Mammary epithelial cell (primary cell): ENCODE measurements at regions of chr10 and their contacts with region 1.

Region 1: GRCh38 chr10:77494327-77494726 is 143.3 kb downstream of the KCNMA1 start:
- DNase-seq: no peak
- H3K4me3 ChIP-seq: no peak overlapping the region
- H3K27ac ChIP-seq: no peak overlapping the region
- H3K4me1 ChIP-seq: peaks cover 33% of the 10 kb centered on the region
- H3K27me3 ChIP-seq: no peaks in the 10 kb centered on the region
- CTCF ChIP-seq: peak; percentile 27 to 40

Region 2: DNA sequence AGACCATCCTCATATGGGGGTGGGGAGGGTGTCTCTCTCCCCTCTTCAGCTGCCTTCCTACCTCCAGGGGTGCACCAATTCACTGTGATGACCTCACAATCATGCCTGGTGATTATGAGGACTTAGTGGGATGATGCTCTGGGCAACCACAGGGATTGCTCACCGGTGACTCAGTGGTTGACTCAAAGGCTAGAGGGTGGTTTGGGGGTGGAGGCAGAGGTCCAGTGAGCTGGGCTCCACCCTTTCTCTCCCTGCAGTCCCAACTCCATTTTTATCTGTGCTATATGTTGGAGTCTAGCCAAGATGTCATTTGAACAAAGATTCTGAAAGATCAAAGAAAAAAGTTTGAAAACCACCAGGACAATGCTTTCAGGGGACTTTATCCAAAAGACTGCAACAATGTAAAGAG is 143.6 kb before region 1 on chr10:
- CTCF ChIA-PET with region 1: no interaction called
- dilution Hi-C with region 1: no loop called
- in situ Hi-C with region 1: no loop called
- intact Hi-C with region 1: no loop called
- DNase-seq: peak; percentile 98
- H3K4me3 ChIP-seq: no peak overlapping the region
- H3K27ac ChIP-seq: peak overlapping the region; percentile 69
- H3K4me1 ChIP-seq: peaks cover 40% of the 10 kb centered on the region
- H3K27me3 ChIP-seq: no peaks in the 10 kb centered on the region
- CTCF ChIP-seq: peak in 1 of 2 donors; percentile 27

Region 3: DNA sequence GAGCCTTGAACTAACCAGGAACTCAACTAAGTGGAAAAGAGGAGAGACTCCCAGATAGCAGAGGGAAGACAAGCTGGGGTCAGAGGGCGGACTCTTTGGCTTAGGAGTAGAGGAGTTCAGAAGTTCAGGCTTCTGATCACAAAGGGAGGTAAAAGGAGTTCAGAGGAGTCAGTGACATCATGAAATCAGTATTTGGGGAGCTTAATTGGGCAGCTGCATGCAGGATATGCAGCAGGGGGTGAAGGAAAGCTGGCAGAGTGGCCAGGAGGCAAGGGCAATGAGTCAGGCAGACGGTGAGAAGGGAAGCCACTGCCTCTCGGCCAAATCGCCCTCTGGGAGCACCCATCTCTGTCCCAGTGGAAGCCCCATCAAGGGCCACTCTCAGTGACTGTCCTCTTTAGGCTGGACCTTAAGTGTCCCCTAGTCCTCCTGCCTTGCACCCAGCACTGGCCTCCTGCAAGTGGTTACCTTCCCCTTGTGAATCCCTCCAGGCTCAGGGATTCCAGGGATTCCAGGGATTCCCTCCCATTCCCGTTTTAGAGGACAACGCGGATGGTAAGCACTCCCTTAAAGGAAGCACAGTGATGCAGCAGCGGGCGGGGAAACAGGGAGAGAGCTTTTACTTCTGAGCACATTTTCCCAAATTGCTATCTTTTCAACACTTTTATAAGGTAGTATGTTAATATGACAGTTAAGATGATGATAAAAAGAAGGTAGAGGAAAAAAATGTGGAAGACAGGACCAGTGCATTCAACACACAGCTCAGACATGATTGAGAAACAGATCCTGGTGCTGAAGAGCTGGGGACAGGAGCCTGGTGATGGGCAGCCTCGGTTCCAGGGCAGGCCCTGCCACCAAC is 70.6 kb after region 1 on chr10:
- CTCF ChIA-PET with region 1: no interaction called
- dilution Hi-C with region 1: loop called (anchors 5 kb)
- in situ Hi-C with region 1: no loop called
- intact Hi-C with region 1: no loop called
- DNase-seq: peak; percentile 46
- H3K4me3 ChIP-seq: no peak overlapping the region
- H3K27ac ChIP-seq: no peak overlapping the region
- H3K4me1 ChIP-seq: peaks cover 22% of the 10 kb centered on the region
- H3K27me3 ChIP-seq: no peaks in the 10 kb centered on the region
- CTCF ChIP-seq: no peak